ENCODE measurements at regions of chr15 and their contacts with region 1.

Region 1: DNA sequence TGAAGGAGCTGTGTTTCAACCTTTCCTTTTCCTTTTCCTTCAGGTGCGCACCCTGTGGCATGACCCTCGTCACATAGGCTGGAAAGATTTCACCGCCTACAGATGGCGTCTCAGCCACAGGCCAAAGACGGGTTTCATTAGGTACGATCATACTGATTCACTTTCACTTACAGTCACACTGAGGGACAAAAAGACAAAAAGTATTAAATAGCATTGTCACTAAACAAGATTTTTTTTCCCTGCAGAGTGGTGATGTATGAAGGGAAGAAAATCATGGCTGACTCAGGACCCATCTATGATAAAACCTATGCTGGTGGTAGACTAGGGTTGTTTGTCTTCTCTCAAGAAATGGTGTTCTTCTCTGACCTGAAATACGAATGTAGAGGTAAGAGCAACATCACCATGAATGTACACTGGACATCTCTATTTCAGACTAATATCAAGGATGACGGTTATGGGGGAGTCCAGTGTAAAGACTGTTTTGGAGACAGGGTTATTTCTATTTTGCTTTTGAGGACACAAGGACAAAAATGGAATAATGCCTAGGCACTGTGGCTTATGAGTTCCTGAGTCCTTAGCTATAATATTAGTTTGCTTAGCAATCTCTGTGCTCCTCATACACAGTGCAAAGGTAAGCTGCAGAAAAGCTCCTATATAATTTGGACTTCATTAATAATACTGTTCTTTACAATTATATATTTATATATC is 13.3 kb downstream of the THBS1 start:
- DNase-seq: peak; percentile 51
- ATAC-seq: peak; percentile 65
- H3K4me3 Mint-ChIP-seq: no peak overlapping the region
- H3K27ac Mint-ChIP-seq: no peak overlapping the region
- H3K4me1 Mint-ChIP-seq: peaks cover 6% of the 10 kb centered on the region
- H3K27me3 Mint-ChIP-seq: peaks cover 2% of the 10 kb centered on the region
- CTCF ChIP-seq: no peak

Region 2: DNA sequence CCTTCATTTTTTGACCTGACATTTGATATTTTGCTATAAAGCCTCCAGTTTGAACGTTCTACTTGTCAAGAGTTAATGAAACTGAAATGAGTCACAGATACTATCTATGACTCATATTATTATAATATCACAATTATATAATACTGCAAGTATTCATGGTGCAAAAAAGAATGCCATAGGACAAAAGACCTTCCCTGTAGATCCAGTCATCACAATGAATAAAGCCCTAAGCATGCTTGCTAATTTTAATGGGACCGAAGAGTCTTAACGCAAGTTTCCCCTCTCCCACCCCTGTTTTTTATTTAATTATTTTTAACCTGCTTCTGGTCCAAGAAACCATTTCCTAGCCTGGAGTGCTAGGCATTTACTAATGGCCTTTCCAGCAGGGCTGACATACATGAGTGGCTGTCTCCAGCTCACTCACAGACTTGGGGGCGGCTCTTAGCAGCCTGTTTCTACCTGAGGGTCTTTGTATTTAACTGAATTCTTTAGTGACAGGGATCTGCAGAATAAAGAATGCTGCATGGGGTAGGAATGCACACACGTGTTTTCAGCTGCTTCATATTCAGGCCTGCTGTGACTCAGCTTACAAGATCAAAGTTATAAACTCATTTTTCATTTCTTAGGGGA is 47.9 kb after region 1 on chr15:
- CTCF ChIA-PET with region 1: no interaction called
- POLR2A ChIA-PET with region 1: no interaction called
- intact Hi-C with region 1: no loop called
- DNase-seq: no peak
- ATAC-seq: peak; percentile 37
- H3K4me3 Mint-ChIP-seq: no peak overlapping the region
- H3K27ac Mint-ChIP-seq: no peak overlapping the region
- H3K4me1 Mint-ChIP-seq: peaks cover 41% of the 10 kb centered on the region
- H3K27me3 Mint-ChIP-seq: peaks cover 8% of the 10 kb centered on the region
- CTCF ChIP-seq: no peak

Region 3: GRCh38 chr15:39666677-39667076 is 72.5 kb after region 1 on chr15:
- CTCF ChIA-PET with region 1: interaction called, 3 read pairs
- POLR2A ChIA-PET with region 1: no interaction called
- intact Hi-C with region 1: loop called (anchors 10 kb)
- DNase-seq: no peak
- ATAC-seq: no peak
- H3K4me3 Mint-ChIP-seq: no peak overlapping the region
- H3K27ac Mint-ChIP-seq: no peak overlapping the region
- H3K4me1 Mint-ChIP-seq: no peaks in the 10 kb centered on the region
- H3K27me3 Mint-ChIP-seq: no peaks in the 10 kb centered on the region
- CTCF ChIP-seq: no peak